ENCODE measurements at regions of chr15 and their contacts with region 1.

Region 1: DNA sequence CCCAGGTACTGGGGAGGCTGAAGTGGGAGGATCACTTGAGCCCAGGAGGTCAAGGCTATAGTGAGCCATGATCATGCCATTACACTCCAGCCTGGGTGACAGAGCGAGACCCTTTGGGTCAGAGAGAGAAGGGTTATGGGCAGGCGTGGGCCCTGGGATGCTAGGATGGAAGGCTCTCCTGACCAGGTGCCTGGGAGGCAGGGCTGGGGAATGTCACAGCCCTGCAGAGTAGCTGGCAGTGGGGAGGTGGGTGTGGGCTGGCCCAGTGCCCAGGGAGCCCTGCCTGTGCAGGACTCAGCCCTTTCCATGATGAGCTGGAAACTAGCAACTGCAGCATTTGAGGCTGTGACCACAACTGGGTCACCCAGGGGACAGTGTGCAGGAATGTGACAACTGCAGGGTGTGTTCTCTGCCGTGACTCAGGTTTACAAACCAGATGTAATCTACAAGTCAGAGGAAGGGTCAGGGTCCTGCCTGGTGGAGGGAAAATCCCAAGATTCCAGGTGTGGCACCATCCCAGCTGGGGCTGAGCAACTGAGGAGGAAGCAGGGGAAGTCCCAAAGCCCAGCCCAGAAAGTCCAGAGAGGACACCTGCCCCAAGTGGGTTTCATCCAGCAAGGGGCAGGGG is 45.4 kb downstream of the SLC28A1 start:
- DNase-seq: peak; percentile 99
- H3K4me3 Mint-ChIP-seq: peak overlapping the region; percentile 10
- H3K27ac Mint-ChIP-seq: peak overlapping the region; percentile 84
- H3K4me1 Mint-ChIP-seq: peaks cover 51% of the 10 kb centered on the region
- H3K27me3 Mint-ChIP-seq: no peaks in the 10 kb centered on the region
- CTCF ChIP-seq: no peak

Region 2: GRCh38 chr15:84600851-84601838 is 328.7 kb before region 1 on chr15 and contains the start of gene ZSCAN2:
- CTCF ChIA-PET with region 1: interaction called, 7 read pairs
- intact Hi-C with region 1: loop called (anchors 1 kb)
- DNase-seq: peak; percentile 99
- H3K4me3 Mint-ChIP-seq: peak within 1 kb of the TSS; percentile 95
- H3K27ac Mint-ChIP-seq: peak within 1 kb of the TSS; percentile 80
- H3K4me1 Mint-ChIP-seq: peaks cover 39% of the 10 kb centered on the region
- H3K27me3 Mint-ChIP-seq: no peaks in the 10 kb centered on the region
- CTCF ChIP-seq: no peak
- total RNA-seq, gene ZSCAN2: 16.0 and 18.0 TPM in 2 replicates

Region 3: GRCh38 chr15:84748274-84749110 is 181.4 kb before region 1 on chr15 and contains the start of gene ZNF592:
- CTCF ChIA-PET with region 1: interaction called, 3 read pairs
- intact Hi-C with region 1: loop called (anchors 5 kb)
- DNase-seq: peak; percentile 93
- H3K4me3 Mint-ChIP-seq: peak within 1 kb of the TSS; percentile 94
- H3K27ac Mint-ChIP-seq: peak within 1 kb of the TSS; percentile 84
- H3K4me1 Mint-ChIP-seq: peaks cover 48% of the 10 kb centered on the region
- H3K27me3 Mint-ChIP-seq: no peaks in the 10 kb centered on the region
- CTCF ChIP-seq: peak; percentile 26
- total RNA-seq, gene ZNF592: 49.5 and 49.6 TPM in 2 replicates

Region 4: DNA sequence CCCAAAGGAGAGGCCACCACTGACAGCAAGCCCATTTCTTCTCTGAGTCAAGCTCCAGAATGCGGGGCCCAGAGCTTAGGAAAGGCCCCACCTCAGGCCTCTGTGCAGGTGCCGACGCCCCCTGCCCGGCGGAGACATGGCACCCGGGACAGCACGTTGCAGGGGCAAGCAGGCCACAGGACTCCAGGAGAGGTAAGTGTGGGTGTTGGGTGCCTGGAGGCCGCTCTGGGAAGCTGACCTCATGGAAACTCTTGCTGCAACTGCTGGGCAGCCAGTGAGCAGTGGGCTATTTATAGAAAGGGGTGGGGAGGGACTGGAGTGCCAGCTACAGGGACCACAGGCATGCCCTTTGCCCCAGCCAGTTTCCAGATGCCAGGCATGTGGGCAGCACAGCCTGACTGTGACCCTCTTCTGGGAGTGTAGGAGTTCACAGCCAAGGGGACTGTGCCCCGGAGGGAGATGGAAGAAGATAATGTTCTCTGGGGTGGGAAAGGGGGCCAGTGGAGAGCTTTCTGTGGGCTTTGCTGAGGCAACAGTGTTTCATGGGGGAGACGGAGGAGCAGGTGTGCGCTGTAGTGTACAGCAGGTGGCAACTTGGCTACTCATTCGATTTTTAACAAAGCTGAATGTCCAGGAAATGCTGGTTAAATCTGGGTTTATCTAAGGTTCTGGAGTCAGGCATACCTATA is 89.0 kb before region 1 on chr15:
- CTCF ChIA-PET with region 1: interaction called, 15 read pairs
- intact Hi-C with region 1: loop called (anchors 1 kb)
- DNase-seq: peak; percentile 89
- H3K4me3 Mint-ChIP-seq: peak overlapping the region; percentile 49
- H3K27ac Mint-ChIP-seq: peak overlapping the region; percentile 93
- H3K4me1 Mint-ChIP-seq: peaks cover 37% of the 10 kb centered on the region
- H3K27me3 Mint-ChIP-seq: peaks cover 24% of the 10 kb centered on the region
- CTCF ChIP-seq: no peak

Region 5: GRCh38 chr15:84883916-84884768 is 45.7 kb before region 1 on chr15 and contains the start of gene SLC28A1:
- CTCF ChIA-PET with region 1: interaction called, 4 read pairs
- intact Hi-C with region 1: loop called (anchors 2 kb)
- DNase-seq: peak; percentile 20
- H3K4me3 Mint-ChIP-seq: no peak within 1 kb of the TSS
- H3K27ac Mint-ChIP-seq: peak within 1 kb of the TSS; percentile 80
- H3K4me1 Mint-ChIP-seq: peaks cover 32% of the 10 kb centered on the region
- H3K27me3 Mint-ChIP-seq: no peaks in the 10 kb centered on the region
- CTCF ChIP-seq: no peak
- total RNA-seq, gene SLC28A1: 0.17 and 0.37 TPM in 2 replicates

Region 6: GRCh38 chr15:84981054-84981710 is 51.3 kb after region 1 on chr15:
- CTCF ChIA-PET with region 1: interaction called, 3 read pairs
- intact Hi-C with region 1: loop called (anchors 2 kb)
- DNase-seq: peak; percentile 99
- H3K4me3 Mint-ChIP-seq: peak overlapping the region; percentile 97
- H3K27ac Mint-ChIP-seq: peak overlapping the region; percentile 94
- H3K4me1 Mint-ChIP-seq: peaks cover 28% of the 10 kb centered on the region
- H3K27me3 Mint-ChIP-seq: no peaks in the 10 kb centered on the region
- CTCF ChIP-seq: peak; percentile 49